ENCODE measurements at regions of chr10 and their contacts with region 1.

Region 1: DNA sequence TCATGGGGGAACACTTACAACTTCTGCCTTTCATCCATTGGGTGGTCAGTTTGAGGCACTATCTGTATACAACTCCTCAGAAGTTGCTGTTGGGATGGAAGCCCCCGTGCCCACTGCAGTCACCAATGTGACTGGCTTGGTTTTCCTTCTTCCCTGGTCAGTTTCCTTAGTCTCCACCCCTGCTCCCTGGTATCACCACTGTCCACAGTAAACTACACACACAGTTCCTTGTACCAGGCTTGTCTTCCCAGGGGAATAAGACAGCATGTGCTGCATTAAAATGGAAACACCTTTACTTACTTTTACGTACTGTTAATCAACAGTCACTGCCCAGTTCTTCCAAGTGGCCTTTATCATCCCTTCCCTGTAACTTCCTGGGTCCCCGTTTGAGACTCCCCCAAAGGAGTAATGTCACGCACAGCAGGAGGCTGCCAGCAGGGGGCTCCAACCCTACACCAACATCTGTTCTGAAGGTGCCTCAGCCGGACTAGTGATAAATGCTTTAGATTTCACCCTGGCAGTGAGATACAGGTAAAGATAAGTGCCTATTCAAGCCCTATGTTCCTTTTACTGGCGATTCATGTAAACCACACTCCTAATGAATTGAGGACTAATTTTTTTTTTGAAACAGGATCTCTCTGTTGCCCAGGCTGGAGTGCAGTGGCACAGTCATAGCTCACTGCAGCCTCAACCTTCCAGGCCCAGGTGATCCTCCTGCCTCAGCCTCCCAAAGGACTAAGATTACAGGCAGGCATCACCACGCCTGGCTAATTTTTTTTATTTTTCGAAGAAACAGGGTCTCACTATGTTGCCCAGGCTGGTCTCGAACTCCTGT is 45.3 kb upstream of the PIK3AP1 start:
- DNase-seq: no peak
- ATAC-seq: peak; percentile 94
- H3K4me3 ChIP-seq: no peak overlapping the region
- H3K27ac ChIP-seq: no peak overlapping the region
- H3K4me1 ChIP-seq: peaks cover 15% of the 10 kb centered on the region
- H3K27me3 ChIP-seq: no peaks in the 10 kb centered on the region
- CTCF ChIP-seq: peak; percentile 87 to 93 (median 89)
- EP300 ChIP-seq: no peak
- POLR2A ChIP-seq: no peak
- RAD21 ChIP-seq: peak; percentile 87

Region 2: DNA sequence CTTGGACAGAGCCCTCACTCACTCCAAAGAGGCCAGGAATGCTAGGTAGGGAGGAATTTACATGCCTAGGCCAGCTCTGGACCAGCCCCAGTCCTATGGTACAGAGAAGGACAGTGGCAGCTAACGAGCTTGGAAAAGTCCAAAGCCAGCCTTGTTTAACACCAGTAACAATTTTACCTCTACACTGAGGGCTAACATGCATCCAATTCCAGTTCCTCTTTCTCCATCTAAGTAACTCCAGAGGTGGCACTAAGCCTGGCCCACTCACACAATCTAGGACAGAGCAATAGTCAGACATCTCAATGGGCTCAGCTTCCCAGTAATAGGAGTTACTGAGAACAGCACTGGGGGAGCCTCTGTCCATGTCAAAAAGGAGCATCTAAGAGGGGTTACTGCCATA is 60.8 kb after region 1 on chr10:
- CTCF ChIA-PET with region 1: interaction called, 11 read pairs
- POLR2A ChIA-PET with region 1: interaction called, 7 read pairs
- RAD21 ChIA-PET with region 1: no interaction called
- SMC1A ChIA-PET with region 1: interaction called, 14 read pairs
- in situ Hi-C with region 1: loop called (anchors 5 kb)
- intact Hi-C with region 1: loop called (anchors 1 kb)
- DNase-seq: no peak
- ATAC-seq: no peak
- H3K4me3 ChIP-seq: no peak overlapping the region
- H3K27ac ChIP-seq: no peak overlapping the region
- H3K4me1 ChIP-seq: peaks cover 5% of the 10 kb centered on the region
- H3K27me3 ChIP-seq: no peaks in the 10 kb centered on the region; a peak in 1 of 4 replicates
- CTCF ChIP-seq: no peak
- EP300 ChIP-seq: no peak
- POLR2A ChIP-seq: no peak
- RAD21 ChIP-seq: no peak